Thyroid gland (tissue), 4 donors: ENCODE measurements at regions of chr4 and their contacts with region 1.

Region 1: DNA sequence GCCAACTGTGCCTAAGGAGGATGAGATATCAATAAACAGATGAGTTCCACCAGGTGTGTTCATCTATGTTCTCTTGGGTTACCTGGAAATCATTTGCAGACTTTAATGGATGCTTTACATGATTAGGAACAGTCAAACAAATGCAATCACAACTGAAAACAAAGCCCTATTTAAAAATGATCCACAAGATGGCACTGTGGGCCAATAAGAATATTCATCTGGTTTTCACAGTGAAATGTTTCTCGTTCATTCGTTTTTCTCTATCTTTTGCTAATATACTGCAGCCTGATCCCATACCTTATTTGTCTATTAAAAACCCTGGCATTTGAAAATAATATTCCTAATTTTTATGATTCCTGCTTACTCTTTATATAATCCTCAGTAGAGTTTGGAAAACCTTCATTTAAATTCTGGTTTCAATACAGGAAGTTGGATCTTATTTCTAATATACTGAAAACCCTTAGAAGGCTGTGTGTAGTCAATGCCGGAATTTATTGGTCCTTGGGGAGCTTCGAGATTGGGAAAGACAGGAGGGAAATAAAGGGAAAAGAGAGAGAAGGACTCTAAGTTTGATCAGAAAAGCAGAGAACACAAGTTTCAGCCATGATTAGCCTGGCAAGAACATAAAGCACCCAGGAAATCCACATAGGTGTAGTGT is 63.8 kb upstream of the TAPT1 start:
- DNase-seq: no peak
- H3K4me3 ChIP-seq: no peak overlapping the region
- H3K27ac ChIP-seq: no peak overlapping the region
- H3K4me1 ChIP-seq: no peaks in the 10 kb centered on the region
- H3K27me3 ChIP-seq: no peaks in the 10 kb centered on the region
- CTCF ChIP-seq: peak; percentile 22 to 82 (median 64)
- POLR2A ChIP-seq: no peak

Region 2: GRCh38 chr4:16443504-16444088 is 153.6 kb after region 1 on chr4:
- intact Hi-C with region 1: loop called (anchors 5 kb)
- DNase-seq: no peak
- H3K4me3 ChIP-seq: no peak overlapping the region
- H3K27ac ChIP-seq: no peak overlapping the region
- H3K4me1 ChIP-seq: peaks cover 6 to 7% of the 10 kb centered on the region in 2 donors
- H3K27me3 ChIP-seq: no peaks in the 10 kb centered on the region
- CTCF ChIP-seq: peak; percentile 31 to 80 (median 58)
- POLR2A ChIP-seq: no peak

Region 3: DNA sequence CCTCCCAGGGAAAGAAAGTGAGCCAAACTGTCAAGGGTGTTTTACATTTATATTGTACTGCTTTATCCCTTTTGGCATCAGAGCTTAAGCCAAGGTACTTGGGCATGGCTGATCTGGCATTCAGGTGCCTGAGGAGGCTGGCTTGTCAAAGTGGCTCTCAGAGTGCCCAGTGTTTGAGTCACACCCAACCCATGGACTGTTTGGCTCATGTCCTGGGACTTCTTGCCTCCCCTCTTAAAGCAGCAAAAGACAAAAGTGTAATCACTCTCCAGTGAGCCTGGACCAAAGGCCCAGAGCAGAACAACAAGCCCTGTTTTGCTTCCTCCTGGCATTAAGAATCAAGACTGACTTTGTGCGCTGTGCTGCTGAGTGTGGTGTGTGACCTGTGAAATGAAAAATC is 247.9 kb after region 1 on chr4:
- intact Hi-C with region 1: no loop called
- DNase-seq: peak; percentile 95
- H3K4me3 ChIP-seq: no peak overlapping the region
- H3K27ac ChIP-seq: peak overlapping the region; percentile 4 to 74 (median 55)
- H3K4me1 ChIP-seq: peaks cover 21 to 33% of the 10 kb centered on the region in 2 donors
- H3K27me3 ChIP-seq: no peaks in the 10 kb centered on the region
- CTCF ChIP-seq: no peak
- POLR2A ChIP-seq: no peak

Region 4: DNA sequence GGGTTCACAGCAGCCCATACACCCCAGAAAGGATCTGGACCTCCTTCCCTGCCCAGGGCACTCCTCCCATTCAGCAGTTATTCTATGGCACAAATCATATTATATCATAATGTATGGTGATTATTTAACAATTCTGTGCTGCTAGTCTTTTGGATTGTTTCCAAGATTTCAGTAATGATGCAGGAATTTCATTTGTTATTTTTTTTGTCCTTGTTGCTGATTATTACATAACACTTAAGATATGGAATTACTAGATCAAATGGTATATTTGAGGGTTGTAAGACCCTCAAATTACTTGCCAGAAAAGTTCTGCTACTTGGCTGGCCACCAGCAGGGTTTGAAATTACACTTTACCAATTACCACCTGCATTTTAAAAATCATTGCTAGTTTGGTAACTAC is 1185.5 kb after region 1 on chr4:
- intact Hi-C with region 1: loop called (anchors 10 kb)
- DNase-seq: no peak
- H3K4me3 ChIP-seq: no peak overlapping the region
- H3K27ac ChIP-seq: no peak overlapping the region
- H3K4me1 ChIP-seq: no peaks in the 10 kb centered on the region
- H3K27me3 ChIP-seq: no peaks in the 10 kb centered on the region
- CTCF ChIP-seq: no peak
- POLR2A ChIP-seq: no peak